CD4-positive, alpha-beta memory T cell (primary cell): ENCODE measurements at regions of chr6 and their contacts with region 1.

Region 1: GRCh38 chr6:41683510-41684310 is 45.4 kb downstream of the MDFI start:
- DNase-seq: peak; percentile 65 to 73 (median 69)
- H3K4me3 ChIP-seq: peak overlapping the region in 1 of 2 donors; percentile 43
- H3K4me3 Mint-ChIP-seq: peak overlapping the region; percentile 42 to 86 (median 66)
- H3K27ac ChIP-seq: peak overlapping the region; percentile 21
- H3K27ac Mint-ChIP-seq: peak overlapping the region in 2 of 7 donors; percentile 22 to 47
- H3K4me1 ChIP-seq: peaks cover 3% of the 10 kb centered on the region
- H3K4me1 Mint-ChIP-seq: peaks cover 4 to 21% (median 10%) of the 10 kb centered on the region in 4 donors
- H3K27me3 ChIP-seq: no peaks in the 10 kb centered on the region
- H3K27me3 Mint-ChIP-seq: peaks cover 0 to under 1% of the 10 kb centered on the region in 2 donors

Region 2: GRCh38 chr6:41306187-41306854 is 377.4 kb before region 1 on chr6:
- CTCF ChIA-PET with region 1: interaction called, 7 read pairs
- POLR2A ChIA-PET with region 1: no interaction called
- intact Hi-C with region 1: loop called (anchors 2 kb)
- DNase-seq: peak in 4 of 5 donors; percentile 31 to 43 (median 36)
- H3K4me3 ChIP-seq: no peak overlapping the region
- H3K4me3 Mint-ChIP-seq: no peak overlapping the region
- H3K27ac ChIP-seq: no peak overlapping the region
- H3K27ac Mint-ChIP-seq: no peak overlapping the region
- H3K4me1 ChIP-seq: no peaks in the 10 kb centered on the region
- H3K4me1 Mint-ChIP-seq: peaks cover 0 to 4% (median under 1%) of the 10 kb centered on the region in 4 donors
- H3K27me3 ChIP-seq: peaks cover 3% of the 10 kb centered on the region
- H3K27me3 Mint-ChIP-seq: peaks cover 6 to 17% of the 10 kb centered on the region in 2 donors

Region 3: DNA sequence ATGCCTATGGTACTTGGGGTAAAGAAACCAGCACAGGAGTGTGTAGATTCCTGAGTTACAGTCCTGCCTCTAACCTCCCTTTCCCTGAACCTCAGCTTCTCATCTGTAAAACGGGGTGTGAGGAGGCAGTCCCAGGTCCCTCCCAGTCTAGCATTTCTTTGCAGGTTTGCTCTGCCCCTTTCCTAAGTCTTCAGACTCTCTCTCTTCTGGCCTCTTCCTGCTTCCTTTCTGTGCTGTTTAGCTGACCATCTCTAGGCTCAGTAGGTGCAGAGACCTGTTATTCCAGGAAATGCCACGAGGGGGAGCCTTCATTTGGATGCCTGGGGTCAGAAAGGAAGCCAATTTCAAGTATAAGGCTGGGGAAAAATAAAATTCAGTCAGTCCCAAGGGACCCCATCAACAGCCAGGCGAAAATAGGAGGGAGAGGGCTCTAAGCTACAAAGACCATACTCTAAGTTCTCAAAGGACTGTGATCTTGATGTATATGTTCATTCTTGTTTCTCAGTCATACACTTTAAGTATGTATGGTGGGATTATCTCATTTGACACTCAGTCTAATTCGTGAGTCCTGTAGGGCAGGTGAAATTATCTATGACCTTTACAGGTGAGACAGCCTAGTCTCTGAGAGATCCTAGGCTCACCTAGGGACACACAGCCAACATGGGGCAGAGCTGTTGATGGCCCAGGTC is 259.2 kb before region 1 on chr6:
- CTCF ChIA-PET with region 1: interaction called, 6 read pairs
- POLR2A ChIA-PET with region 1: no interaction called
- intact Hi-C with region 1: loop called (anchors 1 kb)
- DNase-seq: peak; percentile 63 to 74 (median 68)
- H3K4me3 ChIP-seq: no peak overlapping the region
- H3K4me3 Mint-ChIP-seq: no peak overlapping the region
- H3K27ac ChIP-seq: no peak overlapping the region
- H3K27ac Mint-ChIP-seq: no peak overlapping the region
- H3K4me1 ChIP-seq: peaks cover 31% of the 10 kb centered on the region
- H3K4me1 Mint-ChIP-seq: peaks cover 5 to 9% (median 8%) of the 10 kb centered on the region in 4 donors
- H3K27me3 ChIP-seq: peaks cover 10% of the 10 kb centered on the region
- H3K27me3 Mint-ChIP-seq: peaks cover 10 to 15% of the 10 kb centered on the region in 2 donors

Region 4: DNA sequence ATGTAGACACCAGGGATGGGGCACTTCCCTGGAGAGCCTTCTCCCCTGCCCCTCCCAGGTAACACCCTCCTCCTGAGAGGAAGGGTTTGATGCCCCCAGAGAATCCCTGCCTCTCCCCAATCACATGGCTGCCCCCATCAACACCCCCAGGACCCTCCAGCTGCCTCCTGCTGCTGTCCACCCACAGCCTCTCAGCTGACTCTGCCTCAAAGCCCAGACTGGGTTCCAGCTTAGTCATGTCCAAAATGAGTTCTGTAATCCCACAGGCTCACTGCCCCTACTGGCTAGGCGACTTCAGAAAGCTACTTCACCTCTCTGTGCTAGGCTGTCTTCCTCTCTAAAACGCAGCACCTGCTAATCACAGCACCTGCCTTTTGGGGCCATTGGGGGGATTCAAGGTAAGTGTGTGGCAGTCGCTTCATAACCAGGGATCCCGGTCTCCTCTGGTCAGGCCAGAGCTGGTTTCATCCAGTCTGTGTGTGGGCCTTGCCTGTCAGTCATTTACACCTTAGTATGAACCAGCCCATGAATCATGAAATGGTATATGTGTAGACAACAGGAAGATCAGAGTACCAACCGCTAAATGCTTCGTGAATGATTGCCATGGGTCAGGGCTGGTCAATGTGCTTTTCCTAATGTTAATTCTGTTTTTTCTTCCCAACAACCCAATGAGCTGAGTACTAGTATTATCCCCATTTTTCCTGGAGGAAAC is 11.3 kb after region 1 on chr6:
- CTCF ChIA-PET with region 1: interaction called, 23 read pairs
- POLR2A ChIA-PET with region 1: interaction called, 3 read pairs
- intact Hi-C with region 1: no loop called
- DNase-seq: no peak
- H3K4me3 ChIP-seq: no peak overlapping the region
- H3K4me3 Mint-ChIP-seq: no peak overlapping the region
- H3K27ac ChIP-seq: no peak overlapping the region
- H3K27ac Mint-ChIP-seq: peak overlapping the region in 4 of 7 donors; percentile 43 to 79 (median 54)
- H3K4me1 ChIP-seq: no peaks in the 10 kb centered on the region
- H3K4me1 Mint-ChIP-seq: peaks cover 0 to 4% (median 2%) of the 10 kb centered on the region in 4 donors
- H3K27me3 ChIP-seq: no peaks in the 10 kb centered on the region
- H3K27me3 Mint-ChIP-seq: no peaks in the 10 kb centered on the region

Region 5: GRCh38 chr6:41735427-41736356 is 52.0 kb after region 1 on chr6 and contains the start of gene TFEB:
- CTCF ChIA-PET with region 1: interaction called, 6 read pairs
- POLR2A ChIA-PET with region 1: interaction called, 13 read pairs
- intact Hi-C with region 1: loop called (anchors 2 kb)
- DNase-seq: peak; percentile 92 to 95 (median 92)
- H3K4me3 ChIP-seq: peak within 1 kb of the TSS in 1 of 2 donors; percentile 64
- H3K4me3 Mint-ChIP-seq: peak within 1 kb of the TSS; percentile 77 to 91 (median 82)
- H3K27ac ChIP-seq: peak within 1 kb of the TSS; percentile 75
- H3K27ac Mint-ChIP-seq: peak within 1 kb of the TSS; percentile 42 to 93 (median 76)
- H3K4me1 ChIP-seq: peaks cover 38% of the 10 kb centered on the region
- H3K4me1 Mint-ChIP-seq: peaks cover 16 to 35% (median 26%) of the 10 kb centered on the region in 4 donors
- H3K27me3 ChIP-seq: no peaks in the 10 kb centered on the region
- H3K27me3 Mint-ChIP-seq: peaks cover 0 to 1% of the 10 kb centered on the region in 2 donors
- total RNA-seq, gene TFEB: 12.2 to 15.7 TPM